Heart right ventricle (tissue), 16 donors: ENCODE measurements at regions of chr1 and their contacts with region 1.

Region 1: DNA sequence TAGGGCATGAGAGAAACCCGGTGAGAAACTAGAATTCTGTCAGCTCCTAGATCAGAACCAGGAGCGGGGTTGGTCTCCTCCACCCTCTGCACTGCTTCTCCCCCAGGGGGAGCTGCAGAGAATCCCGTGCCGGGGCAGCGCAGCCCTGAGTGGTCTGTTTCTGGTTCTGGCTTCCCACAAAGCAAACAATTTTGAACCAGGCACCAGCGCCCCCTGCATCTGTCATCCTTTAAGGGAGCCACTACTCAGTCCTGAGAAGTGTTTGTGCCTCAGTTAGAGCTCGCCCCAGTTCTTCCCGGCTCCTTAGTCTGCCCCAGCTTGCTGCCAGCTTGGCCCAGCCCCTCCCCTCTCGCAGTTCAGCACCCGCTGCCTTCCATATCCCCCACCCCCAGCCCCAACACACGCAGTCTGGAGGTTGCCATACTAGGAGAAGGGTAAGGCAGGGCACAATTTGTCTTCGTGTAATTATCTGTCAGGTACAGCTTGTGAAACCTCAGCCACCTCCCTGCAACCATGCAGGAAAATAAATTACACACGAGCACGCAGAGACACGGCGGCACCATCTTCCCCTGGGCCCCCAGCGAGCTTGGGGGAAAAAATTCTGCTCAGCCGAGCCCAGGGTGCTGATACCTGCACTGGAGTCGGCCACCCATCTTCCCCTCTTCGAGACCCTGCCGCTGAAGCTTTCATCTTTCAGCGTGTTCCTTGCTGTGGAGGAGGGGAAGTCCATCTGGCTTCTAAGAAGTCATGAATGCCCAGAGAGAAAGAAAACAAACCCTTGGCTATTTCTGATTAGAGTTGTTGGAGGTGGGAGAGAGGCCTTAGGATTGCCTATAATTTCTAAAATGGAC is 62.6 kb upstream of the CD1D start:
- DNase-seq: peak; percentile 28 to 42
- ATAC-seq: peak in 7 of 8 donors; percentile 49 to 85 (median 70)
- H3K4me3 ChIP-seq: peak overlapping the region in 6 of 10 donors; percentile 5 to 30 (median 24)
- H3K27ac ChIP-seq: no peak overlapping the region
- H3K4me1 ChIP-seq: peaks cover 0 to 20% (median 3%) of the 10 kb centered on the region in 9 donors
- H3K27me3 ChIP-seq: peaks cover 0 to 82% (median 45%) of the 10 kb centered on the region in 7 donors
- CTCF ChIP-seq: peak in 8 of 9 donors; percentile 28 to 69 (median 55)

Region 2: DNA sequence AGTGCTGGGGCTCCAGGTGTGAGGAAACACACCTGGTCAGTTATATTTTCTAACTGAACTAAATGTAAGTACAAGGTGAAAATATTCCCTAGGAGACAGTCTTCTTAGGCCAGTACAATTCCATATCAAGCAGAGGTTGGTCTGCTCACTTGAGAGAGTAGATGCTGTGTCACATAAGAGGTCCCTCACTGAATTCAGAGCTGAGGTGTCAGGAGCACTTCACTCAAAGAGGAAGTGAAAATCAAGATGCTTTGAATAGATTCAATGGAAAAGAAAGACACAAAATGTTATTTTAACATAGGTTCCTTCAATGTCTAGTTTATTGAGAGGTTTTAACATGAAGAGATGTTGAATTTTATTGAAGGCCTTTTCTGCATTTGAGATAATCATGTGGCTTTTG is 413.2 kb before region 1 on chr1:
- intact Hi-C with region 1: no loop called
- DNase-seq: no peak
- ATAC-seq: no peak
- H3K4me3 ChIP-seq: no peak overlapping the region
- H3K27ac ChIP-seq: no peak overlapping the region
- H3K4me1 ChIP-seq: no peaks in the 10 kb centered on the region
- H3K27me3 ChIP-seq: peaks cover 0 to 17% (median 0%) of the 10 kb centered on the region in 7 donors
- CTCF ChIP-seq: no peak

Region 3: DNA sequence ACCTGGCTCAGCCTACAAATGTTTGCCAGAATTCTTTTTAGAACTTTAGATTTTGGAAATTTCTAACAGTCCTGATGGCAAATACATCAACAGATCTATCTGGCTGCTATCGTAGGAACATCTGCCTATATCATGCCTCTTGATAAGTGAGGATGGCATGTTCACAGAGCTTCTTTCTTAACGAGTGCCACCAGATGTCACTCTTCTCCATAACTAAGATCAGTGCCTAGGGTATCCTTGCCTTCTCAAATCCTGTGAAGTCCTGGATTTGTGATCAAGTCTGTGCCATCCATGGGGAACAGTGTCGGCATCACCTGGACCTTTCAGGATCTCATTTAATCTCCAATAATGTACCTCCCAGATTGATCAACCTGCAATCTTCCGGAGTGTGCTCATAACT is 240.0 kb before region 1 on chr1:
- intact Hi-C with region 1: loop called in 3 of 10 experiments (anchors 10 kb)
- DNase-seq: no peak
- ATAC-seq: peak in 5 of 8 donors; percentile 38 to 80 (median 64)
- H3K4me3 ChIP-seq: no peak overlapping the region
- H3K27ac ChIP-seq: no peak overlapping the region
- H3K4me1 ChIP-seq: peaks cover 0 to 12% (median 0%) of the 10 kb centered on the region in 9 donors
- H3K27me3 ChIP-seq: peaks cover 0 to 5% (median 0%) of the 10 kb centered on the region in 7 donors
- CTCF ChIP-seq: peak in 7 of 9 donors; percentile 27 to 65 (median 52)

Region 4: GRCh38 chr1:157948312-157949073 is 169.6 kb before region 1 on chr1:
- intact Hi-C with region 1: no loop called
- DNase-seq: peak in 1 of 2 donors; percentile 23
- ATAC-seq: peak; percentile 58 to 90 (median 81)
- H3K4me3 ChIP-seq: no peak overlapping the region
- H3K27ac ChIP-seq: no peak overlapping the region
- H3K4me1 ChIP-seq: peaks cover 0 to 16% (median 0%) of the 10 kb centered on the region in 9 donors
- H3K27me3 ChIP-seq: peaks cover 0 to 21% (median 10%) of the 10 kb centered on the region in 7 donors
- CTCF ChIP-seq: peak; percentile 15 to 76 (median 64)

Region 5: DNA sequence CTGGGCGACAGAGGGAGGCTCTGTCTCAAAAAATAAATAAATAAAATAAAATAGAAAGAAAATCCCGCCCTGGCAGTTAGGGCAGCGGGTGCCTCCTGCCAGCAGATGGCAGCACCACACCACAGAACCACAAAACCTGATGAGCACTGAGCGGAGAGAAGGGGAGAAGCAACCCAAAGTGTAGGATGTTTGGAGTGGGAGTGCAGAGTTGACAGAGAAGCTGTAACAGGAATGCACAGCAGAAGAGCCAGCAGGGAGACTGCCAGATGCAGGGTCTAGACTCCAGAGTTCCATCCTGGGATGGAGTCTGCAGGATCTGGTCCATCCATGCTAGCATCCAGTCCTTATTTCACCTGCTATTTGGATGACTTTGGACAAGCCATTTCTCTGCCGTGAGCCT is 154.4 kb before region 1 on chr1:
- intact Hi-C with region 1: loop called in 4 of 10 experiments (anchors 2 to 5 kb)
- DNase-seq: peak; percentile 57 to 73
- ATAC-seq: peak; percentile 62 to 88 (median 82)
- H3K4me3 ChIP-seq: no peak overlapping the region
- H3K27ac ChIP-seq: no peak overlapping the region
- H3K4me1 ChIP-seq: peaks cover 0 to 16% (median 3%) of the 10 kb centered on the region in 9 donors
- H3K27me3 ChIP-seq: peaks cover 0 to 32% (median 17%) of the 10 kb centered on the region in 7 donors
- CTCF ChIP-seq: peak; percentile 83 to 97 (median 94)

Region 6: GRCh38 chr1:157969697-157970485 is 148.2 kb before region 1 on chr1:
- intact Hi-C with region 1: loop called in 3 of 10 experiments (anchors 2 to 5 kb)
- DNase-seq: peak in 1 of 2 donors; percentile 66
- ATAC-seq: peak in 7 of 8 donors; percentile 62 to 78 (median 64)
- H3K4me3 ChIP-seq: no peak overlapping the region
- H3K27ac ChIP-seq: peak overlapping the region in 3 of 10 donors; percentile 2 to 46 (median 33)
- H3K4me1 ChIP-seq: peaks cover 0 to 23% (median 13%) of the 10 kb centered on the region in 9 donors
- H3K27me3 ChIP-seq: no peaks in the 10 kb centered on the region
- CTCF ChIP-seq: peak; percentile 57 to 84 (median 79)

Region 7: GRCh38 chr1:157992031-157992832 is 125.8 kb before region 1 on chr1:
- intact Hi-C with region 1: loop called in 6 of 10 experiments (anchors 5 to 10 kb)
- DNase-seq: peak; percentile 72 to 77
- ATAC-seq: peak; percentile 64 to 83 (median 70)
- H3K4me3 ChIP-seq: peak overlapping the region in 2 of 10 donors; percentile 66 to 95
- H3K27ac ChIP-seq: peak overlapping the region in 9 of 10 donors; percentile 39 to 94 (median 55)
- H3K4me1 ChIP-seq: peaks cover 4 to 47% (median 18%) of the 10 kb centered on the region in 9 donors
- H3K27me3 ChIP-seq: peaks cover 0 to 31% (median 6%) of the 10 kb centered on the region in 7 donors
- CTCF ChIP-seq: peak; percentile 84 to 98 (median 95)

Region 8: GRCh38 chr1:158055854-158056253 is 62.2 kb before region 1 on chr1:
- intact Hi-C with region 1: no loop called
- DNase-seq: no peak
- ATAC-seq: peak in 2 of 8 donors; percentile 22 to 47
- H3K4me3 ChIP-seq: no peak overlapping the region
- H3K27ac ChIP-seq: no peak overlapping the region
- H3K4me1 ChIP-seq: peaks cover 0 to 62% (median 14%) of the 10 kb centered on the region in 9 donors
- H3K27me3 ChIP-seq: peaks cover 0 to 4% (median 0%) of the 10 kb centered on the region in 7 donors
- CTCF ChIP-seq: no peak

Region 9: DNA sequence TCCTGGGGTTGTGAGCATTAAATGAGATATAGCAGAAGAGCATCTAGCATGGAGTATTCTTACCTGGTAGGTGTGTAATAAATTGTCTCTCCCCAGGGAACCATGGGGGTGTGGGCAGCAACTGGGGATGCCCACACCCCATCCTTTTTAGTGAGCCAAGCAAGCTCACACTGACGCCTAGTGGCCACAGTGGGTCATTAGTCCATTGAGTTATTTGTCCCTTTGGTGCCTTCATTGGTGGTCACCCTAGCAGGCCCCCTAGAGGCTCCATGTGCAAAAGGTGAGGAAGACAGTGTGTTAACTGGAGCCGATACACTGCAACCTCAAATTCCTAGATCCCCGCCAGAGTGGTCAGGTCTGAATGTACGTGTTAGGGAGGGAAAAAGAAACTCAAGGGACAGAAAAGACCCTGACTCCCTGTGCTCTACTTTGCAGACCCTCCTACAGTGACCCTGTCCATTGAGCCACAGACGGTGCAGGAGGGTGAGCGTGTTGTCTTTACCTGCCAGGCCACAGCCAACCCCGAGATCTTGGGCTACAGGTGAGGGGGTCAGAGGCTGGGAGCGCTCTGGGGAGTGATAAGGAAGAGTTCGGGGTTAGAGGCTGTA is 30.7 kb before region 1 on chr1:
- intact Hi-C with region 1: loop called in 1 of 10 experiments (anchors 5 kb)
- DNase-seq: peak in 1 of 2 donors; percentile 59
- ATAC-seq: peak in 6 of 8 donors; percentile 50 to 81 (median 73)
- H3K4me3 ChIP-seq: no peak overlapping the region
- H3K27ac ChIP-seq: no peak overlapping the region
- H3K4me1 ChIP-seq: no peaks in the 10 kb centered on the region
- H3K27me3 ChIP-seq: no peaks in the 10 kb centered on the region
- CTCF ChIP-seq: peak; percentile 76 to 89 (median 85)

Region 10: DNA sequence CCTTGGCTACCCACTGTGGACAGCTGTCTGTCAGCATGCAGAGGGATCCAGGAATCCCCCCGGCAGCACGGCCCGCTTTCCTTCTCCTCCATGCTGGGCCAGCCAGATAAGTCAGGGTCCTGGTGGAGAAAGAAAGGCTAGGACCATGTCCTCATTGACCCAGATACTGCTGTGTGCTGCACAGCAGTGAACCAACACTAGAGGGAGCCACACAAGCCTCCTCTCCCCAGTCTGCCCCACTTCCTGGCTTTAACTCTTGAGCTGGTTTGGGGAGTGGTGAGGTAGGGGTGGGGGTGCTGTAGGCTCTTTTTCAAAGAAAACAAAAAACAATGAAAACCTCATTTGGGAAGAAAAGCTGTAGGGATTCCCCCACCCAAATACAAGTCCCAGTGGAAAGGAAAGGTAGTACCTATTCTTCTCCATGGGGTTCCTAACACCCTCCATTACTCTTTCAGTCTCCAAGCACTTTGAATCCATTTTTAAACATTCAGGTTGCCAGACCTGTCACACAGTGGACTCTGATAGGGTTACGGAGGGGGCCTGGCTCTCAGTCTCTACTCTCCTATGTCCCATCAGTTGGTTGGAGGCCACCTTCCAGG is 22.2 kb before region 1 on chr1:
- intact Hi-C with region 1: loop called in 1 of 10 experiments (anchors 2 kb)
- DNase-seq: no peak
- ATAC-seq: peak in 6 of 8 donors; percentile 43 to 62 (median 54)
- H3K4me3 ChIP-seq: no peak overlapping the region
- H3K27ac ChIP-seq: peak overlapping the region in 1 of 10 donors; percentile 10
- H3K4me1 ChIP-seq: peaks cover 0 to 16% (median 2%) of the 10 kb centered on the region in 9 donors
- H3K27me3 ChIP-seq: no peaks in the 10 kb centered on the region
- CTCF ChIP-seq: peak; percentile 40 to 77 (median 64)

Region 11: GRCh38 chr1:158391099-158391498 is 273.0 kb after region 1 on chr1:
- intact Hi-C with region 1: no loop called
- DNase-seq: no peak
- ATAC-seq: no peak
- H3K4me3 ChIP-seq: no peak overlapping the region
- H3K27ac ChIP-seq: no peak overlapping the region
- H3K4me1 ChIP-seq: no peaks in the 10 kb centered on the region
- H3K27me3 ChIP-seq: no peaks in the 10 kb centered on the region
- CTCF ChIP-seq: no peak